Mammary epithelial cell (primary cell): ENCODE measurements at regions of chr22 and their contacts with region 1.

Region 1: GRCh38 chr22:42780070-42780540 is 59.4 kb upstream of the A4GALT start:
- DNase-seq: peak; percentile 72
- H3K4me3 ChIP-seq: no peak overlapping the region
- H3K27ac ChIP-seq: no peak overlapping the region
- H3K4me1 ChIP-seq: no peaks in the 10 kb centered on the region
- H3K27me3 ChIP-seq: no peaks in the 10 kb centered on the region
- CTCF ChIP-seq: peak; percentile 82 to 97

Region 2: GRCh38 chr22:42662114-42663021 is 117.7 kb before region 1 on chr22:
- CTCF ChIA-PET with region 1: no interaction called
- dilution Hi-C with region 1: no loop called
- in situ Hi-C with region 1: no loop called
- intact Hi-C with region 1: loop called (anchors 1 kb)
- DNase-seq: peak; percentile 54
- H3K4me3 ChIP-seq: peak overlapping the region; percentile 28 to 80 (median 51)
- H3K27ac ChIP-seq: no peak overlapping the region
- H3K4me1 ChIP-seq: peaks cover 4% of the 10 kb centered on the region
- H3K27me3 ChIP-seq: no peaks in the 10 kb centered on the region
- CTCF ChIP-seq: peak; percentile 50 to 84

Region 3: DNA sequence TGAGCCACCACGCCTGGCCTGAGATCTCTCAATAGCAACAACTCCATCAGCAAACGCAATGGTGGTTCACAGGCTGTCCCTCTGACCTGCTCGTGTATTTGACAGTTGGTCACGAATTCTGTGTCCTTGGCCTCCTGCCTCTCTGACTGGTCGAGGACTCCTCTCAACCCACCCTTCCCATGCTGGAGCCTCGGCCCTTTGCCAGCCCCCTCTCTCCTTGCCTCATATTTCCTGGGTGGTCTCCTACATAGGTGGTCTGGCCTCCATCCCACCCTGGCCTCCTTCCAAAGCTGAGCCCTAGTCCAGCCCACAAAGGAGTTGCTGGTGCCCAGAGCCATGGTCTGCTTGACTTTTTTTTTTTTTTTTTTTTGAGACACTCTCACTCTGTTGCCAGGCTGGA is 48.0 kb before region 1 on chr22:
- CTCF ChIA-PET with region 1: no interaction called
- dilution Hi-C with region 1: no loop called
- in situ Hi-C with region 1: no loop called
- intact Hi-C with region 1: no loop called
- DNase-seq: no peak
- H3K4me3 ChIP-seq: no peak overlapping the region
- H3K27ac ChIP-seq: no peak overlapping the region
- H3K4me1 ChIP-seq: no peaks in the 10 kb centered on the region
- H3K27me3 ChIP-seq: no peaks in the 10 kb centered on the region
- CTCF ChIP-seq: no peak

Region 4: DNA sequence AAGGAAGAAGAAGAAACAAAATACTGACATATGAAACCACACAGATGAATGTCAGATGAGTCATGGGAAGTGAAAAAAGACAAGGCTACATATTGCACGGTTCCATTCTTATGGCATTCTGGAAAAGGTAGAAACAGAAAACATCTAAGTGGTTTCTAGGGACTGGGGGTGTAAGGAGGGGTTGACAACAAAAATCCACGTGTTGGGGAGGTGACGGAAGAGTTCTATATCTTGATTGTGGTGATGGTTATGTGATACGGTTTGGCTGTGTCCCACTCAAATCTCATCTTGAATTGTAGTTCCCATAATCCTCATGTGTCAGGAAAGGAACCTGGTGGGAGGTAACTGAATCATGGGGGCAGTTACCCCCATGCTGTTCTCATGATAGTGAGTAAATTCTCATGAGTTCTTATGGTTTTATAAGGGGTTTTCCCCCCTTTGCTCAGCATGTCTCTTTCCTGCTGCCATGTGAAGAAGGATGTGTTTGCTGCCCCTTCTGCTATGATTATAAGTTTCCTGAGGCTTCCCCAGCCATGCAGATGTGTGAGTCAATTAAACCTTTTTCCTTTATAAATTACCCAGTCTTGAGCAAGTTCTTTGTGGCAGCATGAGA is 83.3 kb after region 1 on chr22:
- CTCF ChIA-PET with region 1: no interaction called
- dilution Hi-C with region 1: no loop called
- in situ Hi-C with region 1: no loop called
- intact Hi-C with region 1: loop called (anchors 1 kb)
- DNase-seq: peak; percentile 85
- H3K4me3 ChIP-seq: no peak overlapping the region
- H3K27ac ChIP-seq: peak overlapping the region; percentile 57
- H3K4me1 ChIP-seq: peaks cover 13% of the 10 kb centered on the region
- H3K27me3 ChIP-seq: no peaks in the 10 kb centered on the region
- CTCF ChIP-seq: no peak

Region 5: GRCh38 chr22:42901790-42902508 is 121.8 kb after region 1 on chr22:
- CTCF ChIA-PET with region 1: no interaction called
- dilution Hi-C with region 1: no loop called
- in situ Hi-C with region 1: no loop called
- intact Hi-C with region 1: no loop called
- DNase-seq: no peak
- H3K4me3 ChIP-seq: no peak overlapping the region
- H3K27ac ChIP-seq: no peak overlapping the region
- H3K4me1 ChIP-seq: peaks cover 13% of the 10 kb centered on the region
- H3K27me3 ChIP-seq: no peaks in the 10 kb centered on the region
- CTCF ChIP-seq: peak; percentile 22 to 29

Region 6: GRCh38 chr22:43036282-43036829 is 256.3 kb after region 1 on chr22:
- CTCF ChIA-PET with region 1: no interaction called
- dilution Hi-C with region 1: no loop called
- in situ Hi-C with region 1: no loop called
- intact Hi-C with region 1: loop called (anchors 5 kb)
- DNase-seq: no peak
- H3K4me3 ChIP-seq: no peak overlapping the region
- H3K27ac ChIP-seq: no peak overlapping the region
- H3K4me1 ChIP-seq: no peaks in the 10 kb centered on the region
- H3K27me3 ChIP-seq: no peaks in the 10 kb centered on the region
- CTCF ChIP-seq: no peak